Right ventricle myocardium superior (tissue), 1 donor: ENCODE measurements at regions of chr2 and their contacts with region 1.

Region 1: GRCh38 chr2:38602732-38603401 is at the start of gene HNRNPLL:
- DNase-seq: peak; percentile 99
- ATAC-seq: peak; percentile 95
- total RNA-seq, gene HNRNPLL: 28.3 TPM

Region 2: GRCh38 chr2:38474715-38475566 is 127.9 kb before region 1 on chr2:
- intact Hi-C with region 1: no loop called
- DNase-seq: no peak
- ATAC-seq: no peak

Region 3: DNA sequence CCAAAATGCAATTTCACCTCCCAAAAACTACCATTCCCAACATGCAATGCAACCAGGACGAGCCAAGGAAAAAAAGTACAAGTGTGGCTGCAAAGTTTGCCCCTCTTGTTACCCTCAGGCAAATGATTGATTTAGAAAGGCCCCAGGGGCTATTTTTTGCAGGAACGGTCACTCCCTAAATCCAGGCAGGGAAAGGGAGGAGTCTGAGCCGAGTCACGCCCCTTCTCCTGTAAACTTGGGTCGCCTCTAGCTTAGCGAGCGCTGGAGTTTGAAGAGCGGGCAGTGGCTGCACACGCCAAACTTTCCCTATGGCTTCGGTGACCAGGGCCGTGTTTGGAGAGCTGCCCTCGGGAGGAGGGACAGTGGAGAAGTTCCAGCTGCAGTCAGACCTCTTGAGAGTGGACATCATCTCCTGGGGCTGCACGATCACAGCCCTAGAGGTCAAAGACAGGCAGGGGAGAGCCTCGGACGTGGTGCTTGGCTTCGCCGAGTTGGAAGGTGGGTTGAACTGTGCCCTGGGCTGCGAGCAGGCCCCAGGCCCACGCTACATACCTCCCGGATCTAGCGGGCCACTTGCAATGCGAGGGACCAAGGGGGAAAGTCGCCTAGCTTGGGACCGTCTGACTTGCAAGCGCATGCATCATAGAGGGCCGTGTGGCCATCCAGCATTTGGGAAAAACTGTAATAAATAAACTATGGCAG is 63.1 kb after region 1 on chr2 and contains the start of gene GALM:
- intact Hi-C with region 1: loop called (anchors 5 kb)
- DNase-seq: peak; percentile 85
- ATAC-seq: peak; percentile 96
- total RNA-seq, gene GALM: 14.7 TPM

Region 4: DNA sequence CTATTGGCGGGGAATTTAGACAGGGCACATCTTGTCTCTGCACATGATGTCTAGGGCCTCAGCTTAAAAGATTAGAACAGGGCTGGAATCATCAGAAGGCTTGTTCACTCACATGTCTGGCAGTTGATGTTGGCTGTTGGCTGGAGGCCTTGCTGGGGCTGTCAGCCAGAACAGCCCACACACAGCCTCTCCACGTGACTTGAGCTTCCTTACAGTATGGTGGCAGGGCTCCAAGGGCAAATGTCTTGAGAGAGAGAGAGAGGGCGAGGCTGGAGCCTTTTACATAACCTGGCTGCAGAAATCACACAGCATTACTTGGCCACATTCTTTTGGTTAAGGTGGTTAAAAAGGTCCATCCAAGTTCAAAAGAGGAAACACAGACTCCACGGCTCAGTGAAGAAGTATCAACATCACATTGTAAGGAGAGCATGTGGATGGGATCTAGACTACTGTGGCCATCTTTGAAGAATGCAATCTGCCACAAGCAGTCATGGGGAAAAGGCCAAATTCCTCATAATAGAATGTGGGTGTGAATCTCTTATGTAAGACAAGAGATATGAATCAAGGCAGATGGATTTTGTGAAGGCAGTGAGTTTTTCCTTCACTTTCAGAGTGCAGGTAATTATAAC is 117.9 kb after region 1 on chr2:
- intact Hi-C with region 1: loop called (anchors 5 kb)
- DNase-seq: peak; percentile 85
- ATAC-seq: peak; percentile 85